ENCODE measurements at regions of chr10 and their contacts with region 1.

Region 1: GRCh38 chr10:8279598-8279997 is 225.1 kb downstream of the GATA3 start:
- DNase-seq: no peak
- H3K4me3 Mint-ChIP-seq: no peak overlapping the region
- H3K27ac Mint-ChIP-seq: no peak overlapping the region
- H3K4me1 Mint-ChIP-seq: peaks cover 10% of the 10 kb centered on the region
- H3K27me3 Mint-ChIP-seq: peaks cover 14% of the 10 kb centered on the region

Region 2: DNA sequence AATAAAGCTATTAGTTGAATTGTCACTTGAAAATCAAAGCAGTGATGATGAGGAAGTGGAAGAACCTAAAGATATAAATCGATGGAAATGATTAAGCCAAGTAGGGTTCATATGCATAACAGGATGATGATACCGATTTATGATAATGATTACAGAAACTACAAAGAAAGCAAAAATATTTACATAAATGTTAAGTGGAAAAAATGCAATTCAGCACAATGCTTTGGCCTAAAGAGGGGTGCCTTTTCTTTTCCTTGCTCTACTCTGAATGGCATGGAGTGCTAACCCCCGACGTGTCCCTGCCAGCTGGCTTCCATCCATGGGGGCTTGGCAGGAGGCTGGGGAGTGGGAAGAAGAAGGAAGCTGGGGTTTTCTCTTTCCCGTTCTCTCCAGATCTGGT is 15.2 kb after region 1 on chr10:
- intact Hi-C with region 1: loop called (anchors 2 kb)
- DNase-seq: no peak
- H3K4me3 Mint-ChIP-seq: no peak overlapping the region
- H3K27ac Mint-ChIP-seq: no peak overlapping the region
- H3K4me1 Mint-ChIP-seq: no peaks in the 10 kb centered on the region
- H3K27me3 Mint-ChIP-seq: peaks cover 27% of the 10 kb centered on the region

Measured in activated CD4-positive, alpha-beta T cell treated with anti-CD3 and anti-CD28 coated beads, Interleukin-2, amount 10 ng/mL, durations not matched to agents 24 days and 14 days (primary cell).